Transverse colon (tissue), 4 donors: ENCODE measurements at regions of chr12 and their contacts with region 1.

Region 1: GRCh38 chr12:10567813-10568212 is 45.6 kb downstream of the MAGOHB start:
- DNase-seq: no peak
- H3K4me3 ChIP-seq: no peak overlapping the region
- H3K27ac ChIP-seq: no peak overlapping the region
- H3K4me1 ChIP-seq: no peaks in the 10 kb centered on the region
- H3K27me3 ChIP-seq: no peaks in the 10 kb centered on the region
- CTCF ChIP-seq: no peak
- EP300 ChIP-seq: no peak
- POLR2A ChIP-seq: no peak

Region 2: DNA sequence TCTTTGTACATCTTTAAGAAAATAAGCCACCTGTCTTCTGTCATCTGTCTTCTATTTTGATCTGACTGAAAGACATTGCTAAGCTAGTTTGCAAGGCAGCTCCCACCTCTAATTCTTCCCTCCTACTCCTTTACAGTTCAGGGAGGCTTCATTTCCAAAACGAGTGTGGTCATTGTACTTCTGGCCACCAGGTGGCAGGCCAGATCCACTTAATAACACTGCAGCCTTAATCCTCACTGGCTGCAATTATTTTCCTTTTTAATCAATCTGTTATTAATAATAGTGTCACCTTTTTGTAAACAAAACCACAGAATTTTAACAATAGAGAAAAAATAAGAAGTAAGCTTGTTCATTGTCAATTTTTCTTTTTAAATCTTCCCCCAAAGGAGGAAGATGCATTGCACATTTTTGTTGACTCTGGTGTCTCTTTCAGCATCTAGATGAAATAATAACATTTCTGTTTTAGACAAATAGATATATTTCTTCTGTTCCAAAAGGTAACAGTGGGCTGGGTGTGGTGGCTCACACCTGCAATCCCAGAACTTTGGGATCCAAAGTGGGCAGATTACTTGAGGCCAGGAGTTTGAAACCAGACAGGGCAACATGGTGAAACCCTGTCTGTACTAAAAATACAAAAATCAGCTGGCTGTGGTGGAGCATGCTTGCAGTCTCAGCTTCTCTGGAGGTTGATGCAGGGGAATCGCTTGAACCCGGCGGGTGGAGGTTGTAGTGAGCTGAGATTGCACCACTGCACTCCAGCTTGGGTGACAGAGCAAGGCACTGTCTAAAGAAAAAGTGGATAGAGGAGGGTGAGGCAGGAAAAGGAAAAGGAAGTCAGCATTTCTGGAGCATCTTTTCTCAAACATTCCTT is 331.8 kb before region 1 on chr12:
- in situ Hi-C with region 1: loop called (anchors 5 to 25 kb)
- intact Hi-C with region 1: loop called (anchors 5 kb)
- DNase-seq: no peak
- H3K4me3 ChIP-seq: no peak overlapping the region
- H3K27ac ChIP-seq: no peak overlapping the region
- H3K4me1 ChIP-seq: no peaks in the 10 kb centered on the region
- H3K27me3 ChIP-seq: no peaks in the 10 kb centered on the region
- CTCF ChIP-seq: peak; percentile 80 to 86 (median 85)
- EP300 ChIP-seq: no peak
- POLR2A ChIP-seq: no peak